Dendritic cell treated with granulocyte-macrophage colony-stimulating factor and Interleukin-4, amounts not matched to agents 40 ng/mL and 50 ng/mL, for 4 days (primary cell): ENCODE measurements at regions of chr16 and their contacts with region 1.

Region 1: GRCh38 chr16:4307215-4308037 is 8.4 kb upstream of the GLIS2 start:
- H3K4me3 Mint-ChIP-seq: peak overlapping the region; percentile 86
- H3K27ac Mint-ChIP-seq: peak overlapping the region; percentile 87
- H3K4me1 Mint-ChIP-seq: peaks cover 47% of the 10 kb centered on the region
- H3K27me3 Mint-ChIP-seq: peaks cover 12% of the 10 kb centered on the region

Region 2: GRCh38 chr16:4260368-4260767 is 47.1 kb before region 1 on chr16:
- intact Hi-C with region 1: no loop called
- H3K4me3 Mint-ChIP-seq: no peak overlapping the region
- H3K27ac Mint-ChIP-seq: no peak overlapping the region
- H3K4me1 Mint-ChIP-seq: peaks cover 19% of the 10 kb centered on the region
- H3K27me3 Mint-ChIP-seq: no peaks in the 10 kb centered on the region

Region 3: GRCh38 chr16:4271176-4272066 is 36.0 kb before region 1 on chr16:
- intact Hi-C with region 1: loop called (anchors 5 kb)
- H3K4me3 Mint-ChIP-seq: peak overlapping the region; percentile 88
- H3K27ac Mint-ChIP-seq: peak overlapping the region; percentile 91
- H3K4me1 Mint-ChIP-seq: peaks cover 18% of the 10 kb centered on the region
- H3K27me3 Mint-ChIP-seq: peaks cover 4% of the 10 kb centered on the region

Region 4: GRCh38 chr16:4288148-4288921 is 19.1 kb before region 1 on chr16:
- intact Hi-C with region 1: loop called (anchors 1 kb)
- H3K4me3 Mint-ChIP-seq: no peak overlapping the region
- H3K27ac Mint-ChIP-seq: no peak overlapping the region
- H3K4me1 Mint-ChIP-seq: peaks cover 30% of the 10 kb centered on the region
- H3K27me3 Mint-ChIP-seq: peaks cover 40% of the 10 kb centered on the region